Common myeloid progenitor, CD34-positive (primary cell): ENCODE measurements at regions of chr9 and their contacts with region 1.

Region 1: GRCh38 chr9:116737152-116737546 is 50.0 kb downstream of the TRIM32 start:
- DNase-seq: peak; percentile 62 to 67 (median 66)
- H3K4me3 ChIP-seq: peak overlapping the region in 1 of 7 experiments; percentile 17
- H3K27ac ChIP-seq: no peak overlapping the region
- H3K4me1 ChIP-seq: peaks cover 0 to 6% (median 0%) of the 10 kb centered on the region in 4 experiments
- H3K27me3 ChIP-seq: peaks cover 0 to 11% (median 7%) of the 10 kb centered on the region in 5 experiments

Region 2: GRCh38 chr9:116726602-116727001 is 10.5 kb before region 1 on chr9:
- CTCF ChIA-PET with region 1: interaction called, 16 read pairs
- POLR2A ChIA-PET with region 1: no interaction called
- DNase-seq: no peak
- H3K4me3 ChIP-seq: no peak overlapping the region
- H3K27ac ChIP-seq: no peak overlapping the region
- H3K4me1 ChIP-seq: no peaks in the 10 kb centered on the region
- H3K27me3 ChIP-seq: peaks cover 0 to 2% (median 0%) of the 10 kb centered on the region in 5 experiments

Region 3: GRCh38 chr9:116860509-116861120 is 123.5 kb after region 1 on chr9:
- CTCF ChIA-PET with region 1: interaction called, 59 read pairs
- POLR2A ChIA-PET with region 1: no interaction called
- DNase-seq: peak; percentile 11 to 27 (median 14)
- H3K4me3 ChIP-seq: no peak overlapping the region
- H3K27ac ChIP-seq: no peak overlapping the region
- H3K4me1 ChIP-seq: no peaks in the 10 kb centered on the region
- H3K27me3 ChIP-seq: no peaks in the 10 kb centered on the region